ENCODE measurements at regions of chr12 and their contacts with region 1.

Region 1: DNA sequence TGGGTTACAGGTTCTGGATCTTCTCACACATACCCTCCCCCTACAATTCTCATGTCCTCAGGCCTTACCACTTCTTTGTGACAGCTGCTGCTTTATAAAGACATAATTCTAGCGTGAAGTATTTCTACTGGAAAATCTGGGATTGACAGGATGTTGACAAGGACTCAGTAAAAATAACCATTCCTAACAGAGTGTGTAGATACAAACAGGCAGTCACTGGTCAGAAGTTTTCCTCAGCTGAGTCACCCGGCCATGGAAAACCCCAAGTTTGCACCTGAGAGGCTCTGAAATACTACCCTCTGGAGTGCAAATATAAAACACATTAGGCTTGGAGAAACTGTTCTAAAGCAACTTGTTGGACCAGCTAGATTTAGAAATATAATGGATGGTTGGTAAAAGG is 54.4 kb downstream of the SPPL3 start:
- DNase-seq: peak; percentile 88
- H3K4me3 ChIP-seq: no peak overlapping the region
- H3K27ac ChIP-seq: peak overlapping the region; percentile 80
- H3K4me1 ChIP-seq: peaks cover 26% of the 10 kb centered on the region
- H3K27me3 ChIP-seq: no peaks in the 10 kb centered on the region
- CTCF ChIP-seq: peak in 1 of 2 donors; percentile 26

Region 2: DNA sequence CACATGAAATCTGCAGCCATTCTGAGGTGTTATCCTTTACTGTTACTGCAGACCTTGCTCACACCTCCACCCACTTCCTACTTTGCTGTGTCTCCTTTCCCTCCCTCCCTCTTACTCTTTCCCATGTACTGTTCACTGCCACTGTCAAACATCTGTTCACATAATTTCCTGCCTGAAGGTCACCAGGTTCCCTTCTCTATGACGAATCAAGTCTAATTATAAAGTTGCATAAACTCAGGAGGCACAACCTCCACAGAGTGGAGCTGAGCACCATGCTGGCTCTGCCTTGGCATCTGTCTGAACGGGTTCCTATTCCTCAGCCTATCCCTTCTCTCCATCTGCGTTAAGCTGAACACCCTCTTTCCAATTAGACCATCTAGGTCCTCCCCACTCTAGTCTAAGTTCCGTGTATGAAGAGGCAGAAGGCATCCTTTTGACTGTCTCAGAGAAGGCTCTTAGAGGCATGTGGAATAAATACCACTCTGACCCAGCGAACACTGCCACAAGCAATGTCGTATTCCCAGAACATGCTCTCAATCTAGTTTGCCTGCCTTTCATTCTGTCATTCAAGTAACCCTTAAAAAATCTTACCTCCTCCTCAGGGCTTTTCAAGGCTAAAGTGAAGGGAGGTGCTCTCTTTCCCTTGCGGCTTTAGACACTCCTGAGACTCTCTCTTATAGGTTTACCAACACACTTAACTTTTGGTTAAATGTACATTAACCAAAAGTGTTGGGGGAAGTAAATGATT is 75.4 kb before region 1 on chr12:
- CTCF ChIA-PET with region 1: no interaction called
- dilution Hi-C with region 1: loop called (anchors 5 kb)
- in situ Hi-C with region 1: no loop called
- intact Hi-C with region 1: no loop called
- DNase-seq: no peak
- H3K4me3 ChIP-seq: no peak overlapping the region
- H3K27ac ChIP-seq: no peak overlapping the region
- H3K4me1 ChIP-seq: no peaks in the 10 kb centered on the region
- H3K27me3 ChIP-seq: no peaks in the 10 kb centered on the region
- CTCF ChIP-seq: no peak

Region 3: DNA sequence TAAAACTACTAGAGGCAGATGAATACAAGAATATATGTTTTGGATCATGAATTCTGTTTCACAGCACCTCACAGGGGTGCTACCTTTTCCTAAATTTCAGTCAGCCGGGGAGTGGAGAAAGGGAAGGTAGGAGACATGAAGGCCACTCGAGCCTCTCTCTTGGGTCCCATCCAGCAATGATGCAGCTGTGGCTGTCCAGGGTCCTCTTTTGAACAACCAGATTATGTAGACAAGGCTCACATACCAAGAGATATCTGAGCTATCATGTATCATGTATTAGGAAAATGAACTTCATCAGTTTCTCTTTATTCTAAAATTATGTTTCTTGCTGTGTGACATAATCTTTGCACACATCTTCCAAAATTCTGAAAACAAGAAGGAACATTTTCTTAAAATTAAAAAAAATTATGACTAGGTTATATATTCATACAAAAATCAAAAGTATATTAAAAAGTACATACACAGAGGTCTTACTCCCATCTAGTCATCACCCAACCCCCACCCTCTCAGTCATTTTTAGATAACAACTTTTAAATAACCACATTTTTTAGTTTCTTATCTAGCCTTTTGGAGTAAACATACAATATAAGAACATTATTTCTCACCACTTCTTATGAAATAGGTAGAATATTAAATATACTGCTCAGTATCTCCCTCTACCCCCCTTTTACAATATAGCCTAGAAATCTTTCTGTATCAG is 35.4 kb before region 1 on chr12:
- CTCF ChIA-PET with region 1: no interaction called
- dilution Hi-C with region 1: loop called (anchors 5 kb)
- in situ Hi-C with region 1: no loop called
- intact Hi-C with region 1: no loop called
- DNase-seq: no peak
- H3K4me3 ChIP-seq: no peak overlapping the region
- H3K27ac ChIP-seq: no peak overlapping the region
- H3K4me1 ChIP-seq: no peaks in the 10 kb centered on the region
- H3K27me3 ChIP-seq: no peaks in the 10 kb centered on the region
- CTCF ChIP-seq: no peak

Region 4: DNA sequence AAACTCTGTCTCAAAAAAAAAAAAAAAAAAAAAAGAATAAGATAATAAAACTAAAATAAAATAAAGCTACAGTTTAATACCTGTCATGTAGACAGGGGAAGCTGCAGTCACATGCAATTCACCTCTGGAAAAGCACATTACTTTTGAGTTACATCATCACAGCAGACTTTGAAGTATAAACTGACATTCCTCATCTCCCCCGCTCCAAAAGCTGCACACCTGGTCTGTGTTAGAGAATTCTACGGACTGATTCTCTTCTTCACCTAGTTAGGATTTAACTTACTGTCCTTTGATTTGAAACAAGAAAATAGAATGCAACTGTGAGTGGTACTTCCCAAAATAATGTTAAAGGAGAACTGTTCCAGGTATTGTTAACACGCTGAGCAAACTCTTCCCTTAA is 29.3 kb after region 1 on chr12:
- CTCF ChIA-PET with region 1: no interaction called
- dilution Hi-C with region 1: loop called (anchors 5 kb)
- in situ Hi-C with region 1: no loop called
- intact Hi-C with region 1: no loop called
- DNase-seq: peak; percentile 25
- H3K4me3 ChIP-seq: no peak overlapping the region
- H3K27ac ChIP-seq: no peak overlapping the region
- H3K4me1 ChIP-seq: no peaks in the 10 kb centered on the region
- H3K27me3 ChIP-seq: no peaks in the 10 kb centered on the region
- CTCF ChIP-seq: no peak

Region 5: DNA sequence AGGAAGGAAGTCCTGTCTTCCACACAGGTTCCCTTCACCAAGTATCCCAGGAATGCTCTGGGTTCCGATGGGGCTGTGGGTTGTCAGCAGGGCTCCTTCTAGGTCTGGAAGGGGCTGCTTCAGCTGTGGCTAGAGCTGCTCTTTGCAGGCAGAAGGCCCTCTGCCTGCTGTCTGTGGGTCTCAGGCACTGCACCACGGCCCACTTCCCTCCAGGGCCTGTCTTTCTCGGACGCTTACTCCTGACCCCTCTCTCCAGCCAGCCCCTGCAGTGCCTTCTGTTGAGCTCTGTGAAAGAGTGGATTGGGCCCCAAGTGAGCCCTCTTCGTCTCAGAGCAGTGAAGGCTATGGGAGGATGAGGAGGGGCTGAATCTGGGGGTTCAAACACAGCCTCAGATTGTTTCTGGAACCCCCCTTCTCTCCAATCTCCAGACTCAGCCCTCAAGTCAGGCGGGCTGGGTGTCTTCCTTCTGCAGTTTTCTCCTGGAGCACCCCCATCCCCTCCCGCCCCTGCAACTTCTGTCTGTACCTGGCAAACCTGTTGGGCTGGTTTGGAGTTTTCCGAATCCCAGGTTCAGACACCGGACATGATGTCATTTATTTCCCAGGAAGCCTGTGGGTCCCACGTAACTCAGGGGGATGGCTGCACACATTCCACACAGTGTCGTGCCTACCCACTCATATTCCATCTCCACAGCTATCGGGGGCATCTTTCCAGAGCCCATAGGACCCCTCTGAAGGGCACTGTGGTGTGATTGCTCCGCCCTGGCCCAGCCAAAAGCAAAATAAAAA is 79.3 kb after region 1 on chr12:
- CTCF ChIA-PET with region 1: no interaction called
- dilution Hi-C with region 1: loop called (anchors 5 kb)
- in situ Hi-C with region 1: no loop called
- intact Hi-C with region 1: no loop called
- DNase-seq: peak; percentile 81
- H3K4me3 ChIP-seq: peak overlapping the region in 2 of 3 experiments; percentile 13 to 35
- H3K27ac ChIP-seq: peak overlapping the region; percentile 78
- H3K4me1 ChIP-seq: peaks cover 25% of the 10 kb centered on the region
- H3K27me3 ChIP-seq: no peaks in the 10 kb centered on the region
- CTCF ChIP-seq: no peak

Measured in mammary epithelial cell (primary cell).